Activated CD4-positive, alpha-beta memory T cell treated with anti-CD3 and anti-CD28 coated beads, Interleukin-2, amount 10 ng/mL, durations not matched to agents 7 days and 5 days (primary cell): ENCODE measurements at regions of chr1 and their contacts with region 1.

Region 1: DNA sequence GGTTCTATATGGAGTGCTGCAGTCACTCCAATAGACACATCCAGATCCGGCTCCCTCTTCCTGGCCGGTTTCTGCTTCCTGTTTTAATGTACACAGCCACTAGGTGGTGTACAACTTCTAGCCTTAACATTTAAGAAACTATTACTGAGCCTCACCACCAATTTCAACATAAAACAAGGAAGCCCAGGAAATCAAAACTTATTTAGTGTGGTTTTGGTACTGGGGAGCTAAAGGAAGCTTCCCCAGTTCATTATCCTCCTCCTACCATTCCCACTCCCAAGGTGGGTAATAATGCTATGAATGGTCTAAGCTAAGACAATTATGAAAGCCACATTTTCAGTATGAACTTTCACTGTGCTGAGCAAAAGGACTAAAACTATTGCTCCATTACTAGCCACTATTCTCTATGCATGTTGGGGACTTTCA is 25.5 kb upstream of the MTMR11 start:
- DNase-seq: peak; percentile 54
- H3K4me3 Mint-ChIP-seq: no peak overlapping the region
- H3K27ac Mint-ChIP-seq: no peak overlapping the region
- H3K4me1 Mint-ChIP-seq: peaks cover 23% of the 10 kb centered on the region
- H3K27me3 Mint-ChIP-seq: no peaks in the 10 kb centered on the region

Region 2: GRCh38 chr1:150010393-150011115 is 48.4 kb after region 1 on chr1 and contains the start of gene OTUD7B:
- CTCF ChIA-PET with region 1: interaction called, 10 read pairs
- POLR2A ChIA-PET with region 1: interaction called, 3 read pairs
- DNase-seq: peak; percentile 80
- H3K4me3 Mint-ChIP-seq: peak within 1 kb of the TSS; percentile 91
- H3K27ac Mint-ChIP-seq: peak within 1 kb of the TSS; percentile 76
- H3K4me1 Mint-ChIP-seq: peaks cover 35% of the 10 kb centered on the region
- H3K27me3 Mint-ChIP-seq: no peaks in the 10 kb centered on the region
- total RNA-seq, gene OTUD7B: 15.9 to 17.4 TPM

Region 3: GRCh38 chr1:150053926-150054325 is 91.8 kb after region 1 on chr1:
- CTCF ChIA-PET with region 1: interaction called, 24 read pairs
- POLR2A ChIA-PET with region 1: interaction called, 4 read pairs
- DNase-seq: no peak
- H3K4me3 Mint-ChIP-seq: no peak overlapping the region
- H3K27ac Mint-ChIP-seq: no peak overlapping the region
- H3K4me1 Mint-ChIP-seq: peaks cover 3% of the 10 kb centered on the region
- H3K27me3 Mint-ChIP-seq: peaks cover 11% of the 10 kb centered on the region

Region 4: GRCh38 chr1:150072959-150073358 is 110.8 kb after region 1 on chr1:
- CTCF ChIA-PET with region 1: interaction called, 12 read pairs
- POLR2A ChIA-PET with region 1: no interaction called
- DNase-seq: no peak
- H3K4me3 Mint-ChIP-seq: no peak overlapping the region
- H3K27ac Mint-ChIP-seq: peak overlapping the region; percentile 24
- H3K4me1 Mint-ChIP-seq: peaks cover 47% of the 10 kb centered on the region
- H3K27me3 Mint-ChIP-seq: no peaks in the 10 kb centered on the region